ENCODE measurements at regions of chr11 and their contacts with region 1.

Region 1: DNA sequence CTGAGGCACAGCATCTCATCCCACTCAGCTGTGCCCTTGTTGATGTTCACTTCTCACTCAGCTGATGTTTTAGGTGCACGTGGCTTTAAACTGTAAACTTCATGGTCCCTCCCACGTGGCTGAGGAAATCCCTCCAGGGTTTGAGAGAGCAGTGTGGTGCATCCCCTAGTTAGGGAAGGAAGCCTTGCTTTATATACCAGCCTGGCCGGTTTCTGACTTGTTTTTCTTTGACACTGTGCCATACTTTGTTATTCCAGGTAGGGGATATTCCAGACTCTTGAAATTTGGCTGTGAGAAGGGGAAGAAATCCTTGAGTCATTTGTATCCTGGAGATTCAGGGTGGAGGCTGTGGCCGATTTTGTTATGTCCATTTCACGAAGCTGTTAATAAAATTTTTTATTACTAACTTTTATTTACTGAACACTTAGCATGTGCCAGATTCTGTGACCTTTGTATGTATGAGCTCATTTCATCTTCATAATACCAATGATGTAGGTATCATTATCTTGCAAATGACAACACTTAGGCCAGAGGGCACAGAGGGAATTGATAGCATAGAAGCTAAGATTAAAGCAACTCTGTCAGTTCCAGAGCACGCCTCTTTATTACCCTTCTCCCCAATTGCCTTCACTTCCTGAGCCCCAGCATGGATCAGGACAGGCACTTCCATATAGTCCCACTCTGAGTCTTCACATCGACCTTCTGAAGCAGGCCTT is 116.6 kb downstream of the NAV2 start:
- DNase-seq: no peak
- H3K4me3 ChIP-seq: no peak overlapping the region
- H3K27ac ChIP-seq: no peak overlapping the region
- H3K27me3 ChIP-seq: no peaks in the 10 kb centered on the region
- CTCF ChIP-seq: no peak

Region 2: GRCh38 chr11:19769820-19770219 is 59.4 kb before region 1 on chr11:
- intact Hi-C with region 1: loop called in 1 of 2 experiments (anchors 10 kb)
- DNase-seq: no peak
- H3K4me3 ChIP-seq: no peak overlapping the region
- H3K27ac ChIP-seq: no peak overlapping the region
- H3K27me3 ChIP-seq: no peaks in the 10 kb centered on the region
- CTCF ChIP-seq: no peak

Region 3: GRCh38 chr11:19872512-19873145 is 43.4 kb after region 1 on chr11:
- intact Hi-C with region 1: loop called in 1 of 2 experiments (anchors 5 kb)
- DNase-seq: peak in 1 of 10 donors; percentile 82
- H3K4me3 ChIP-seq: no peak overlapping the region
- H3K27ac ChIP-seq: peak overlapping the region in 2 of 59 donors; percentile 20 to 58
- H3K27me3 ChIP-seq: no peaks in the 10 kb centered on the region
- CTCF ChIP-seq: no peak

Measured in dorsolateral prefrontal cortex (tissue), 120 donors.